ENCODE measurements at regions of chr3 and their contacts with region 1.

Region 1: GRCh38 chr3:68876112-68876713 is 56.1 kb downstream of the TAFA4 start:
- DNase-seq: peak; percentile 18
- CTCF ChIP-seq: peak; percentile 76

Region 2: DNA sequence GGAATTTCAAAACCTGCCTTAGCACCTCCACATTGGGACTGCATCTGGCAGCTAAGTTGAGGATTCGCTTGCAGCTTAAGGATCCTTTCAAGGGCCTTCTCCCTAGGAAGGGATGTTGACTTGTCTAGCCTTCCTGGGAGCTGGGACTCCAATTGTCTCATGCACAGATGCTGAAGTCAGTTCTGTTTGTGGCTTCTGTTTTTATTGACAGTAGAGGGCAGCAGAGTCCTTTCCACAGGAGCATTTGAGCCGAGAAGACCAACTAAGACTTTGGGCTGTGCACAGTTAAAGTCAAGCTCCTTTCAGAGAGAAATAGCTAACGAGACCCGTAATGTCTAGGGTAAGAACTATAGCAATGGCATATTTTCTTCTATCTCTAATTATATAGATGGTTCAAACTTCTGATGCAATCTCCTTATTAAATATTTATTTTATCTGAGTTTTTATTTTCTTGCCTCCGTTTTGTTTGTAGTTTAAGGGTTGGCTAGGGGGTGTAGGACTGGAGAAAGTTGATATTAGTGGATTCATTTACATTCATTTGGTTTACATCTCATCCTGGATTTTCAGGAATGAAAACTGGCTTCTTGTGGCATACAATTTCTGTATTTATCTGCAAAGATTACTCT is 1937.8 kb before region 1 on chr3:
- CTCF ChIA-PET with region 1: interaction called, 10 read pairs
- POLR2A ChIA-PET with region 1: no interaction called
- DNase-seq: peak; percentile 29
- CTCF ChIP-seq: peak; percentile 68

Region 3: DNA sequence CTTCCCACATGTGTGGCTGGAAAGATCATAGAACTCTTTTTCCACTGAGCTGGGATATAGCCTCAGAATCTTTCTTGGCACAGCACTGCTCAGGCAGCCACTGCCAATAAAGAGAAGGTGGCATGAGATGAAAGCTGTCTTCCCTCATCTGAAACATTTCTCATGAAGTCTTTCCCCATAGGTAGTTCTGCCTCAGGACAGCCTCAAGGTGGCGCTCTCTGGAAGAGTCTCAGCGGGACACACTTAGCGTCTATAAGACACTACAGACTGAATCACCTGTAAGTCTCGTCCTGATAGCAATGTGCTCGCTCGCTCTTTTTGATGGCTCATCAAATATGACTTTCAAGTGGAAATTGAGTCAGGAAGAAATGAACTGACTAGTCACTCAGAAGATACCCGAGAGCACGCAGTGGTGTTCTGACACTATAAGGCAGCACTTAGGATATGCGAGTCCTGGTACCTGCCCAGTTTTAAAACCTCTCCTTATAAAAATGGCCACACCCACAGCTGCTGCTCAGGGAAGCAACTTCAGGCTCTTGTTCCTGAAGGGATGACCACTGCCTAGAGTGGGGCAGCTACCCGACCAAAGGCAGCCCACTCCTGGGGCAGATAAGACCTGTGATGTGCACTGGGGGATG is 1491.3 kb before region 1 on chr3:
- CTCF ChIA-PET with region 1: interaction called, 11 read pairs
- POLR2A ChIA-PET with region 1: no interaction called
- DNase-seq: peak; percentile 22
- CTCF ChIP-seq: peak; percentile 53

Region 4: DNA sequence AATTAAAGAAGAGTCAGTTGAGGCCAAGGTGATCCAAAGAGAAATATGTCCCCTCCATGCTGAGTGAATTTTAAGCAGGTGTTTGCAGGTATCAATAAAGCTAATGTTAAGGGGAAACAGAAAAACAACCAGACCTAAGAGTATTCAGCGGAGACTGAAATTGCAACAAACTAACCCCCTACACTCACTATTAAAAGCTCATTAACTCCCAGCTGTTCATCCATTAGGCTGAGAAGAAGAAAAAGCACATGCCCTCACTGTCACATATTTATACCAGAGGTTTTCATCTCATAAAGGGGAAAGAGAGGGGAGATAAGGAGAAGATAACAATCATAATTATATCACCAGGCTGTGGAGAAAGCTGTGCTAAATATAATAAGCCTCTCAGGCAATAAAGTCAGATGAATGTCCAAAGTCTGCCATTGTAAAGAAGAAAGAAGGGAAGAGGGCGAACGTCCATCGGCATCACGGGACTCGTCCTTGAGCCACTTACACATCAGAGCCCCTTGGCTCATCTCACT is 89.0 kb before region 1 on chr3:
- CTCF ChIA-PET with region 1: no interaction called
- POLR2A ChIA-PET with region 1: no interaction called
- DNase-seq: no peak
- CTCF ChIP-seq: no peak

Region 5: DNA sequence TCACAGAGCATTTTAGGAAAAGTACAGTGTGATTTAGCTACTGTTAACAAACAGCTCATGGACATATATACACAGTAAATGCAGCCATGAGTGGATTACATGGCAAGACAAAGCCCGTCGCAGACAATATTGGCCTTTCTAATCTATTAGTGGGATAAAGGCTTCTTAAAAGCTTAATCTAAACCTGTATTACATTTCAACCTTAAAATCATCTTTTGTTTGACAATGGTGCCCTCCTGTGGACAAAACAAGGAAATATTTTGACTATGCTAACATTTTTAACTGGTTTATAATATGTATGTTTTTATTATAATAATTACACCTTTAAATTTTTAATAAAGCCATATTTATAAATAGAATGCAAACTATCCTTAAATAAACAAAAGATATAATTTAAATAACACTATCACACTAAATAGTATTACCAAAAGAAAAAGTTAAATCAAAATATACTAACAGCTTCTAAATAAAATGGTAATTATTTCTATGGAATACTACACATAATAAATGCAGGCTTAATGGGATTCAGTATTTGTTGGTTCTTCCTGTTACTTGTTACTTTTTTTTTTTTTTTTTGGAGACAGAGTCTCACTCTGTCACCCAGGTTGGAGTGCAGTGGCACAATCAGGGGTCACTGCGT is 17.5 kb after region 1 on chr3:
- CTCF ChIA-PET with region 1: interaction called, 10 read pairs
- POLR2A ChIA-PET with region 1: no interaction called
- DNase-seq: peak; percentile 22
- CTCF ChIP-seq: peak; percentile 41